GM12878 (cell line): ENCODE measurements at regions of chr2 and their contacts with region 1.

Region 1: GRCh38 chr2:88350331-88351248 is 101.9 kb downstream of the FOXI3 start:
- DNase-seq: no peak
- ATAC-seq: peak; percentile 88
- H3K4me3 ChIP-seq: no peak overlapping the region
- H3K27ac ChIP-seq: no peak overlapping the region
- H3K4me1 ChIP-seq: no peaks in the 10 kb centered on the region
- H3K27me3 ChIP-seq: no peaks in the 10 kb centered on the region; a peak in 1 of 4 replicates
- CTCF ChIP-seq: peak; percentile 69 to 88 (median 72)
- EP300 ChIP-seq: no peak
- POLR2A ChIP-seq: no peak
- RAD21 ChIP-seq: peak; percentile 20; the same call in 1 of the 2 replicates

Region 2: DNA sequence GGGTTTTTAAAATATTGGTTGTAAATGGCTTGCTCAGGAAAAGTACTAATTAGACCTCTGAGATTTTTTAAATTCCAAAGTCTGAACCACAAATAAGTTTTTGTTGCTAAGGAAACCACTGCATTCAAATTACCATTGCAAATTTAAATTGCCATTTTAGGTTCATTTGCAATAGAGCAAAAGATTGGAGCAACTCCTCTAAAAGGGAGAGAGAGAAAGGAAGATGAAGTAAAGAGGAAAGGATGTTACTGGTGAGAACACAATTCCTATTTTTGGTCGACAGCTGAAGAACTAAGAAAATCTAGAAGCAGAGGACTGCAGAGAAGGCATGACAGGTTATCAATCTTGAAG is 27.0 kb after region 1 on chr2:
- CTCF ChIA-PET with region 1: interaction called, 10 read pairs
- POLR2A ChIA-PET with region 1: no interaction called
- RAD21 ChIA-PET with region 1: no interaction called
- SMC1A ChIA-PET with region 1: no interaction called
- in situ Hi-C with region 1: no loop called
- intact Hi-C with region 1: no loop called
- DNase-seq: no peak
- ATAC-seq: no peak
- H3K4me3 ChIP-seq: no peak overlapping the region
- H3K27ac ChIP-seq: no peak overlapping the region
- H3K4me1 ChIP-seq: no peaks in the 10 kb centered on the region
- H3K27me3 ChIP-seq: no peaks in the 10 kb centered on the region
- CTCF ChIP-seq: no peak
- EP300 ChIP-seq: no peak
- POLR2A ChIP-seq: no peak
- RAD21 ChIP-seq: no peak